Motor neuron (in vitro differentiated cells): ENCODE measurements at regions of chr14 and their contacts with region 1.

Region 1: DNA sequence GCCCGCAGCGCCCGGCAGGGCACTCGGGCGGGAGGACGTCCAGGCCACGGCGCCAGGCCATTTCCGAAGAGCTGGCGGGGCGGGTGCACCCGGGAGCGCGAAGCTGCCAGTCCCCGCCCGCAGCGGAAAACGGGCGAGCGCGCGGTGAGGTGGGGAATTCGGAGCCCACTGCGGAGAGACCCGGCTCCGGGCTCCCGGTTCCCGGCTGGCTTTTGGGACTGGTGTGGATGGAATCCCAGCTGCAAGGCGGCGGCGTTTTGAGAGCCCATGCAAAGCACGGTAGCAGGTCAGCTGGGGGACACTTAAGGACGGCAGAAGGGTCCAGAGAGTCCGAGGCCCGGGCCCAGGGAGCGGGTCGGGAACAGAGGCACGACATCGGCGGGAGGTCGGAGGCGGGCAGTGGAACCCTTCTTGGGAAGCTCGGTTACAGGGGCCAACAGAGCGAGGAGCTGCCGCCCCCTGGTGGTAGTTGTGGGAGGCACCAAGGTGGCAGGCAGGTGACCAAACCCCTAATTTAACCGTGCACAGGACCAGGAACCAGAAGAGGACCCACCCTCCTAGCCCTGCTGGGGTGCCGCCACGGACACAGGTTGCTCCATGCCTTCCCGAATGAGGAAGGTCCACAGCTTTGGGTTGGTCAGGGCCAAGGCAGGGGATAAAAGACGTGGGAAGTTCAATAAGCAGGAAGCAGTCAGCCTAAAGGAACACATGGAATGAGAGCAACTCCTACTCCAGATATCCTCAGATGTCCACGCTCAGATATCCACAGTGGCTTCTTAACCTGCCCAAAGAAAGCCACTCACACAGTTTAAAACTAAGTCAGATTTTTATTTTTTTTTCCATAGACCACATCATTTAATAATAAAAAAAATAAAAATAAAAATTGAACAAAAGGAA is 685 bp upstream of the CDH24 start:
- ATAC-seq: peak; percentile 57 to 78 (median 75)
- H3K4me3 ChIP-seq: peak overlapping the region; percentile 47 to 84 (median 61)
- H3K27ac ChIP-seq: peak overlapping the region; percentile 52 to 58
- H3K4me1 ChIP-seq: peaks cover 6 to 10% of the 10 kb centered on the region in 2 donors

Region 2: GRCh38 chr14:22973217-22974032 is 84.6 kb before region 1 on chr14:
- in situ Hi-C with region 1: loop called in 2 of 9 experiments (anchors 25 kb)
- ATAC-seq: peak in 6 of 8 experiments; percentile 10 to 67 (median 35)
- H3K4me3 ChIP-seq: no peak overlapping the region
- H3K27ac ChIP-seq: no peak overlapping the region
- H3K4me1 ChIP-seq: peaks cover 22 to 24% of the 10 kb centered on the region in 2 donors

Region 3: GRCh38 chr14:22994762-22995275 is 63.2 kb before region 1 on chr14:
- in situ Hi-C with region 1: loop called in 4 of 9 experiments (anchors 10 kb)
- ATAC-seq: peak in 6 of 8 experiments; percentile 28 to 97 (median 58)
- H3K4me3 ChIP-seq: no peak overlapping the region
- H3K27ac ChIP-seq: no peak overlapping the region
- H3K4me1 ChIP-seq: peaks cover 22 to 33% of the 10 kb centered on the region in 2 donors